ENCODE measurements at regions of chr3 and their contacts with region 1.

Region 1: DNA sequence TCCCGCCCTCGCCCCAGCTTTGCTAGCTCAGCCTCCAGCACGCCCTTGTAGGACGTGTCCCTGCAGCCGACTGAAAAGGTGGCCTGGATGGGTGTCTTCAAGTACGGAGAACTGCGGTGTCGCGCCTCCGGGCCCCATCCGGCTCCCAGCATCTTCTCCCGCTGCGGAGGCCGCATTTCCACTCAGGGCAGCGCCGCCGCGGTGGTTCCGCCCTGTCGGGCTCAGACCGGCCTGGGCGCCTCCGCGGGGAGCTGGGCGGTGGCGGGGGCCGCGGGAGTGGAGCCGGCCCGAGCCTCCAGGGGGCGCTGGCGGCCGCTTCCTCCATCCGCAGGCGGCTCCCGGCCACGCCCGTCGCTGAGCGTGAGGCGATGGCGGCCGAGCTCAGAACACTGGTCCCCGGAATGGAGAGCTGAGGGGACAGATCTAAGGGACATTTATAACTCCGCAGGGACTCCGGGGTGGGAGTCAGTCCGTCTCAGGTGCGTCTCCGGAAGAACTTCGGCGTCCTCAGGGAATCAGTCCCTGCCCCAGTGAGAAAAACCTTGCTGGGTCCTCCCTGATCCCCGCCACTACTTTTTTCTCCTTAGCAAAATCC is 13.6 kb upstream of the SMCO1 start:
- DNase-seq: peak; percentile 85
- H3K4me3 Mint-ChIP-seq: peak overlapping the region; percentile 65
- H3K27ac Mint-ChIP-seq: peak overlapping the region; percentile 85
- H3K4me1 Mint-ChIP-seq: peaks cover 15% of the 10 kb centered on the region
- H3K27me3 Mint-ChIP-seq: peaks cover 24% of the 10 kb centered on the region

Region 2: GRCh38 chr3:196251918-196252317 is 276.8 kb before region 1 on chr3:
- CTCF ChIA-PET with region 1: interaction called, 46 read pairs
- DNase-seq: no peak
- H3K4me3 Mint-ChIP-seq: no peak overlapping the region
- H3K27ac Mint-ChIP-seq: peak overlapping the region; percentile 24
- H3K4me1 Mint-ChIP-seq: peaks cover 5% of the 10 kb centered on the region
- H3K27me3 Mint-ChIP-seq: no peaks in the 10 kb centered on the region

Region 3: GRCh38 chr3:196506687-196507086 is 22.0 kb before region 1 on chr3:
- CTCF ChIA-PET with region 1: interaction called, 10 read pairs
- DNase-seq: no peak
- H3K4me3 Mint-ChIP-seq: no peak overlapping the region
- H3K27ac Mint-ChIP-seq: no peak overlapping the region
- H3K4me1 Mint-ChIP-seq: peaks cover 10% of the 10 kb centered on the region
- H3K27me3 Mint-ChIP-seq: peaks cover 16% of the 10 kb centered on the region

Region 4: GRCh38 chr3:196555295-196555694 is 26.6 kb after region 1 on chr3:
- CTCF ChIA-PET with region 1: interaction called, 10 read pairs
- DNase-seq: no peak
- H3K4me3 Mint-ChIP-seq: no peak overlapping the region
- H3K27ac Mint-ChIP-seq: no peak overlapping the region
- H3K4me1 Mint-ChIP-seq: peaks cover 12% of the 10 kb centered on the region
- H3K27me3 Mint-ChIP-seq: no peaks in the 10 kb centered on the region

Region 5: DNA sequence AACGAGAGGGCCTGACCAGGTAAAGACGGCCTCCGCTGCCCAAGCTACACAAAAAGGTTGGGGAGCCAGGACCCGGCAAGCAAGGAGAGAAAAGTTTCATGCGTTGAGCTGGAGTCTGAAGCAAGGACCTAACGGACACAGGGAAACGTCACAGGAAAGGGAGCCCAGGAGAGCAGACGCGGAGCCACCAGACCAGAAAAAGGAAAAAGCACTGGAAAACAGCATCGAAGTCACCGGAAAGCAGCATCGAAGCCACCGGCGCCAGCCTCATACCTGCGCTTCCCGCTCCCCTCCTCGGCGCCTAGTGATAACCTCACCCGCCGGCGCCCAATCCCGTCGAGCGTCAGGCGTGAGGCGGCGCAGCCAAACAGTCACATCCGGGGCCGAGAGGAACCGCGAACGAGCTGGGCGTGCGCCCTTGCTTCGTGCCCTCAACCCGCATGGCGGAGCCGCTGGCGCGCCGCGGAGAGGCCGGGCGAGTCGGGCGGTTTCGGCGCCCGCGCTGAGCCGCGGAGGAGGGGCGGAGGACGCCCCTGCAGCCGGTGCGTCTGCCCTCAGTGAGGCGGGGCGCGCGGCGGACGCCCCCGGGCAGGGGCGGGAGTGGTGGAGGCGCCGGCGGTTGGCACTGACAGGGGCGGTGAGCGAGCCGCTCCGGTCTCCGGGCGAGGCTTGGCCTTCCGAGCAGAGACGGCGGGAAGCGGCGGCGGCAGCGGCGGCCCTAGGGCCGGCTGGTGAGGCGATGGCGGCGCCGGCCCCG is 39.7 kb after region 1 on chr3 and contains the starts of genes FBXO45 and WDR53:
- CTCF ChIA-PET with region 1: interaction called, 16 read pairs
- DNase-seq: peak; percentile 97
- H3K4me3 Mint-ChIP-seq: peak within 1 kb of the TSS; percentile 95
- H3K27ac Mint-ChIP-seq: peak within 1 kb of the TSS; percentile 97
- H3K4me1 Mint-ChIP-seq: peaks cover 55% of the 10 kb centered on the region
- H3K27me3 Mint-ChIP-seq: peaks cover 3% of the 10 kb centered on the region

Measured in activated naive CD4-positive, alpha-beta T cell treated with anti-CD3 and anti-CD28 coated beads, Interleukin-2, amount 10 ng/mL, durations not matched to agents 7 days and 5 days (primary cell).